ENCODE measurements at regions of chr9 and their contacts with region 1.

Region 1: GRCh38 chr9:37903647-37904444 is at the start of gene SLC25A51:
- DNase-seq: peak; percentile 93 to 98 (median 95)
- H3K4me3 ChIP-seq: peak within 1 kb of the TSS; percentile 89 to 94
- H3K4me3 Mint-ChIP-seq: peak within 1 kb of the TSS; percentile 86 to 98 (median 91)
- H3K27ac ChIP-seq: peak within 1 kb of the TSS; percentile 75
- H3K27ac Mint-ChIP-seq: peak within 1 kb of the TSS; percentile 93 to 98 (median 94)
- H3K4me1 ChIP-seq: peaks cover 30% of the 10 kb centered on the region
- H3K4me1 Mint-ChIP-seq: peaks cover 12 to 39% (median 26%) of the 10 kb centered on the region in 4 donors
- H3K27me3 ChIP-seq: no peaks in the 10 kb centered on the region
- H3K27me3 Mint-ChIP-seq: peaks cover 0 to 2% of the 10 kb centered on the region in 2 donors
- total RNA-seq, gene SLC25A51: 40.2 to 43.3 TPM

Region 2: GRCh38 chr9:37746848-37747753 is 156.7 kb before region 1 on chr9:
- CTCF ChIA-PET with region 1: no interaction called
- POLR2A ChIA-PET with region 1: no interaction called
- intact Hi-C with region 1: loop called (anchors 5 kb)
- DNase-seq: peak; percentile 40 to 52 (median 45)
- H3K4me3 ChIP-seq: no peak overlapping the region
- H3K4me3 Mint-ChIP-seq: no peak overlapping the region
- H3K27ac ChIP-seq: no peak overlapping the region
- H3K27ac Mint-ChIP-seq: no peak overlapping the region
- H3K4me1 ChIP-seq: no peaks in the 10 kb centered on the region
- H3K4me1 Mint-ChIP-seq: peaks cover 0 to 4% (median 0%) of the 10 kb centered on the region in 4 donors
- H3K27me3 ChIP-seq: no peaks in the 10 kb centered on the region
- H3K27me3 Mint-ChIP-seq: no peaks in the 10 kb centered on the region

Region 3: DNA sequence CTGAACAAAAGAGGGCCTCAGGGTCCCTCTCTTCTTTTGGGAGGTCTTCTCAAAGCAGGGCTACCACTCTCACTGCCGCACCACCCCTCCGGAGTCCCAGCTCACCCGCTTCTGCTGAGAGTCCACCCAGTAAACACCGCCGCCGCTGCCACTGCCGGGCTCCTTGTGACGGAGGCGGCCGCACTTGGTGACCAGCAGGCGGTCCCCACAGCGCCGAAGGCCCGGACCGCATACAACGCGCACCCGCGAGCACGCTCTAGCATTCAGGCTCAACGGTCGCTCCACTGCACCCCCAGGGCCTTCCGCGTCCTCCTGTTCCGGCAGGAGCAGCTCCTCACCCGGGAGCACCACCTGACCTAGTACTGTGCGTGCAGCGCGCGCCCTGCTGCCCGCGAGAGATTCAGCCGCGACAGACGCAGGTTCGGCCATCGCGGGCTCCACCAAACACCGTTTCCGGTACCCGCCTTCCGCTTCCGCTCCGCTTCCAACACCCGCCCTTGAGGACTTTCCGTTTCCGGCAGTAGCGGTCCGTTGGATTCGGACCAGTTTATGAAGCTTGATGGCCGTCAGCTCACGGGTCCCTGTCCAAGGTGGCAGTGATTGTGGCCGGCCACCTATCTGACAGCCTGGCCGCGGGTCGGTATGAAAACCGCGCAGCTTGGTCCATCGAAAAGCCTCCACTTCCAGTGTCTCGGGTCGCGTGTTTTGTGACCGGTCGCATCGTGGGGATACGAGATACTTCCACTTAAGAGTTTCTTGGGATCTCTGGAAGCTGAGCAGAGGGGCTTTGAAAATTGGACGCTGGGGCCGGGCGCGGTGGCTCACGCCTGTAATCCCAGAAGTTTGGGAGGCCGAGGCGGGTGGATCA is 119.0 kb before region 1 on chr9 and contains the start of gene EXOSC3:
- CTCF ChIA-PET with region 1: no interaction called
- POLR2A ChIA-PET with region 1: no interaction called
- intact Hi-C with region 1: loop called (anchors 1 kb)
- DNase-seq: peak; percentile 82 to 88 (median 83)
- H3K4me3 ChIP-seq: peak within 1 kb of the TSS; percentile 93 to 98
- H3K4me3 Mint-ChIP-seq: peak within 1 kb of the TSS; percentile 96 to 99 (median 96)
- H3K27ac ChIP-seq: peak within 1 kb of the TSS; percentile 83
- H3K27ac Mint-ChIP-seq: peak within 1 kb of the TSS; percentile 95 to 98 (median 97)
- H3K4me1 ChIP-seq: peaks cover 31% of the 10 kb centered on the region
- H3K4me1 Mint-ChIP-seq: peaks cover 23 to 45% (median 30%) of the 10 kb centered on the region in 4 donors
- H3K27me3 ChIP-seq: no peaks in the 10 kb centered on the region
- H3K27me3 Mint-ChIP-seq: no peaks in the 10 kb centered on the region
- total RNA-seq, gene EXOSC3: 63.5 to 68.6 TPM

Region 4: DNA sequence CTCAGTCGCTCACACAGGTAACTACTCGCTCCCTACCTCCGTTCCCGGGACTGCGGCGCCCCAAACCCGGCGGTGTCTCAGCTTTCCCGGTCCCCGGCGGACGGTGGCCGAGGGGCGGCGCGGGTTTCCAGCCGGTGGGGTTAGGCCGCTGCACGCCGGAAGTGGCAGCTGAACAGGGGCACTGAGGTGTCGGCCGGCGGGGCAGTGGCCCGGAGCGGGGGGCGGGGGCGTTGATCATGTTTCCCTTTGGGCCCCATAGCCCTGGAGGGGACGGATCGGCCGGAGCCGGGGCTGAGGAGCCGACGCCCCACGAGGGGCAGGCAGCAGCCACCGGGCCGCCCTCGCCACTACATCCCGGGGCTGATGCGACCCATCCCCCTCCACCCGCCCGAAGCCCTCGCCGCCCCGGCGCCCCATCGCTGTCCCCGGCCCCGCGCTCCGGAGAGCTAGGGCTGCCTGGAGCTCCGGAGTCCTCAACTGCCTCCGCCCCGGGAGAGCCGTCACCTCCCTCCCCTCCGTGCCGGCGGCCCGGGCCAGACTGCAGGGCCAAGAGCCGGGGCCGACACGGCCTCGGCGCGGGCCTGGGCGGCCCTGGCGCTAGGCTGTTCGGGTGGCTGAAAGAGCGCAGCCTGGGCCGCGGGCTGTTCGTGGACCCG is 103.1 kb before region 1 on chr9 and contains the start of gene DCAF10:
- CTCF ChIA-PET with region 1: no interaction called
- POLR2A ChIA-PET with region 1: interaction called, 6 read pairs
- intact Hi-C with region 1: loop called (anchors 5 kb)
- DNase-seq: peak; percentile 83 to 91 (median 86)
- H3K4me3 ChIP-seq: peak within 1 kb of the TSS; percentile 76 to 98
- H3K4me3 Mint-ChIP-seq: peak within 1 kb of the TSS; percentile 91 to 96 (median 94)
- H3K27ac ChIP-seq: peak within 1 kb of the TSS; percentile 70
- H3K27ac Mint-ChIP-seq: peak within 1 kb of the TSS; percentile 87 to 97 (median 92)
- H3K4me1 ChIP-seq: peaks cover 35% of the 10 kb centered on the region
- H3K4me1 Mint-ChIP-seq: peaks cover 23 to 48% (median 33%) of the 10 kb centered on the region in 4 donors
- H3K27me3 ChIP-seq: no peaks in the 10 kb centered on the region
- H3K27me3 Mint-ChIP-seq: no peaks in the 10 kb centered on the region
- total RNA-seq, gene DCAF10: 20.3 to 21.7 TPM

Region 5: DNA sequence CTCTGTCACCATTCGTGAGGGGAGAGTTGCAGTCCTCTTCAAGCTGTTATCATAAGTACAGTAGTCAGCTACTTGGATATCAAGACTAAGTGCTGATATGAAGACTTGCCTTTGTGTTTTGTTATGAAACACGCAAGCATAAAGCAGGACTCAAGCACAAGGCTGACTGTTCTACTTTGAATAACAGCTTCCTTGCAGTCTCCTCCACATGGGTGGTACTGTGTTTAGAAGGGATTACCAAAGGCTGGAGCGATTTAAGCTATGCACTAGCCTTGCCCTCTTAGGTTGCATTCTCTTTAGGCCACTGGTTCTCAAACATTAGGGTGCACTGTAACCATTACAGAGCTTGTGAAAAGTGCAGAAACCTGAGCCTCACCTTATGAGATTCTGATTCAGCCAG is 41.3 kb before region 1 on chr9:
- CTCF ChIA-PET with region 1: interaction called, 3 read pairs
- POLR2A ChIA-PET with region 1: interaction called, 3 read pairs
- intact Hi-C with region 1: loop called (anchors 5 kb)
- DNase-seq: no peak
- H3K4me3 ChIP-seq: no peak overlapping the region
- H3K4me3 Mint-ChIP-seq: no peak overlapping the region
- H3K27ac ChIP-seq: no peak overlapping the region
- H3K27ac Mint-ChIP-seq: peak overlapping the region in 1 of 7 donors; percentile 12
- H3K4me1 ChIP-seq: no peaks in the 10 kb centered on the region
- H3K4me1 Mint-ChIP-seq: no peaks in the 10 kb centered on the region
- H3K27me3 ChIP-seq: no peaks in the 10 kb centered on the region
- H3K27me3 Mint-ChIP-seq: no peaks in the 10 kb centered on the region

Region 6: GRCh38 chr9:37925786-37926736 is 22.2 kb after region 1 on chr9:
- CTCF ChIA-PET with region 1: no interaction called
- POLR2A ChIA-PET with region 1: no interaction called
- intact Hi-C with region 1: no loop called
- DNase-seq: no peak
- H3K4me3 ChIP-seq: no peak overlapping the region
- H3K4me3 Mint-ChIP-seq: no peak overlapping the region
- H3K27ac ChIP-seq: no peak overlapping the region
- H3K27ac Mint-ChIP-seq: peak overlapping the region in 1 of 7 donors; percentile 51
- H3K4me1 ChIP-seq: no peaks in the 10 kb centered on the region
- H3K4me1 Mint-ChIP-seq: no peaks in the 10 kb centered on the region
- H3K27me3 ChIP-seq: no peaks in the 10 kb centered on the region
- H3K27me3 Mint-ChIP-seq: peaks cover 0 to 2% of the 10 kb centered on the region in 2 donors

Region 7: GRCh38 chr9:38068866-38069629 is 165.2 kb after region 1 on chr9 and contains the start of gene SHB:
- CTCF ChIA-PET with region 1: interaction called, 4 read pairs
- POLR2A ChIA-PET with region 1: no interaction called
- intact Hi-C with region 1: loop called (anchors 1 kb)
- DNase-seq: peak; percentile 75 to 79 (median 77)
- H3K4me3 ChIP-seq: peak within 1 kb of the TSS; percentile 65 to 76
- H3K4me3 Mint-ChIP-seq: peak within 1 kb of the TSS; percentile 81 to 91 (median 88)
- H3K27ac ChIP-seq: peak within 1 kb of the TSS; percentile 61
- H3K27ac Mint-ChIP-seq: peak within 1 kb of the TSS; percentile 63 to 91 (median 82)
- H3K4me1 ChIP-seq: peaks cover 25% of the 10 kb centered on the region
- H3K4me1 Mint-ChIP-seq: peaks cover 14 to 52% (median 28%) of the 10 kb centered on the region in 4 donors
- H3K27me3 ChIP-seq: peaks cover 6% of the 10 kb centered on the region
- H3K27me3 Mint-ChIP-seq: no peaks in the 10 kb centered on the region
- total RNA-seq, gene SHB: 0.81 to 1.3 TPM

Measured in CD4-positive, alpha-beta memory T cell (primary cell).